ENCODE measurements at regions of chr9 and their contacts with region 1.

Region 1: DNA sequence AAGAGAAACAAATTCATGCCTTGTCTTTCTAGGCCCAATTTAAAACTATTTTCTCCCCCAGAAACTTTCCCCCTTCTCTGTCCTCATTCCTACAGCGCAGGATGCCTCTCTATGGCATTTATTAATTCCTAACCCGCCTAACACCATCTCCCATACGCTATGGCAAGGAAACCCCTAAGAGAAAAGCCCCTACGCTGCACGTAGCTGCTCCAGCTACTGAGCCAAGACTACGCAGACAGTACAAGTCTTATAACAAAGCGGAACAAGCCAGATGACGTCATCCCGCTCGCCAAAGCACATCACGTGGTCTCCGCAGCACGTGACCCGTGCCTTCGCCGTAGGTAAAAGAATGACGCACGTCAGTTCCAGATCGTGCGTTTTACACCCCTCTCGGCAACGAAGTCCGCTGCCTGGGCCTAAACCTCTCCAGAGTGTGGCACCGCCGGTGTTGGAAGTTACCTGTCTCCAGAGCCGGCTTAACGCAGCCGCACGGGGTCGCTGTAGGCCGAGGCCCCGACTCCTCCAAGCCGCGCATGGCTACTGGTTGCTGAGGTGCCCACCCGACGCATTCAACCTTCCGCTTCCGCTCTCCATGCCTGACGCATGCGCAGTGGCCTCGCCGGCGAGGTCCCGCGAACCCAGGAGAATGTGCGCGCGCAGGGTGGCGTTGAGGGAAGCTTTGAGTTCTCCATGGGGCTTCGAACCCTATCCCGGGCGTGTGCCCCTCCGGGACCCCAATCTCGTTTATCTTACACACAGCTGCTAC is at the start of gene TRMO:
- DNase-seq: peak; percentile 93 to 97
- ATAC-seq: peak; percentile 94 to 97
- H3K4me3 ChIP-seq: peak within 1 kb of the TSS; percentile 66 to 85 (median 68)
- H3K27ac ChIP-seq: peak within 1 kb of the TSS; percentile 90 to 98 (median 94)
- H3K4me1 ChIP-seq: peaks cover 17 to 34% of the 10 kb centered on the region in 2 donors
- H3K27me3 ChIP-seq: peaks cover 0 to 4% (median 0%) of the 10 kb centered on the region in 3 donors
- CTCF ChIP-seq: peak; percentile 55 to 86 (median 76)
- POLR2A ChIP-seq: peak; percentile 75 to 81
- total RNA-seq, gene TRMO: 10.5 to 23.4 (median 15.7) TPM

Region 2: GRCh38 chr9:96418074-96418809 is 1503.9 kb before region 1 on chr9 and contains the start of gene ZNF367:
- in situ Hi-C with region 1: no loop called
- intact Hi-C with region 1: loop called (anchors 5 kb)
- DNase-seq: peak; percentile 96 to 98
- ATAC-seq: peak; percentile 77 to 82
- H3K4me3 ChIP-seq: peak within 1 kb of the TSS; percentile 71 to 89 (median 84)
- H3K27ac ChIP-seq: peak within 1 kb of the TSS; percentile 99
- H3K4me1 ChIP-seq: peaks cover 21 to 26% of the 10 kb centered on the region in 2 donors
- H3K27me3 ChIP-seq: no peaks in the 10 kb centered on the region
- CTCF ChIP-seq: no peak
- POLR2A ChIP-seq: peak in 1 of 2 donors; percentile 8
- total RNA-seq, gene ZNF367: 0.15 to 5.1 (median 1.7) TPM

Region 3: GRCh38 chr9:97961361-97961760 is 39.2 kb after region 1 on chr9:
- in situ Hi-C with region 1: no loop called
- intact Hi-C with region 1: loop called (anchors 5 kb)
- DNase-seq: no peak
- ATAC-seq: no peak
- H3K4me3 ChIP-seq: no peak overlapping the region
- H3K27ac ChIP-seq: no peak overlapping the region
- H3K4me1 ChIP-seq: peaks cover 0 to 4% of the 10 kb centered on the region in 2 donors
- H3K27me3 ChIP-seq: no peaks in the 10 kb centered on the region
- CTCF ChIP-seq: no peak
- POLR2A ChIP-seq: no peak

Region 4: GRCh38 chr9:98056269-98057137 is 134.4 kb after region 1 on chr9 and contains the start of gene NANS:
- in situ Hi-C with region 1: loop called in 2 of 4 experiments (anchors 10 kb)
- intact Hi-C with region 1: loop called (anchors 1 kb)
- DNase-seq: peak; percentile 91
- ATAC-seq: peak; percentile 95 to 98
- H3K4me3 ChIP-seq: peak within 1 kb of the TSS; percentile 72 to 83 (median 74)
- H3K27ac ChIP-seq: peak within 1 kb of the TSS; percentile 91 to 93 (median 92)
- H3K4me1 ChIP-seq: peaks cover 8 to 15% of the 10 kb centered on the region in 2 donors
- H3K27me3 ChIP-seq: no peaks in the 10 kb centered on the region
- CTCF ChIP-seq: peak in 1 of 5 experiments; percentile 13
- POLR2A ChIP-seq: peak; percentile 92 to 98
- total RNA-seq, gene NANS: 29.0 to 64.7 (median 34.2) TPM

Region 5: GRCh38 chr9:98146101-98146991 is 224.2 kb after region 1 on chr9:
- in situ Hi-C with region 1: no loop called
- intact Hi-C with region 1: no loop called
- DNase-seq: no peak
- ATAC-seq: no peak
- H3K4me3 ChIP-seq: no peak overlapping the region
- H3K27ac ChIP-seq: no peak overlapping the region
- H3K4me1 ChIP-seq: no peaks in the 10 kb centered on the region
- H3K27me3 ChIP-seq: no peaks in the 10 kb centered on the region
- CTCF ChIP-seq: no peak
- POLR2A ChIP-seq: no peak

Region 6: DNA sequence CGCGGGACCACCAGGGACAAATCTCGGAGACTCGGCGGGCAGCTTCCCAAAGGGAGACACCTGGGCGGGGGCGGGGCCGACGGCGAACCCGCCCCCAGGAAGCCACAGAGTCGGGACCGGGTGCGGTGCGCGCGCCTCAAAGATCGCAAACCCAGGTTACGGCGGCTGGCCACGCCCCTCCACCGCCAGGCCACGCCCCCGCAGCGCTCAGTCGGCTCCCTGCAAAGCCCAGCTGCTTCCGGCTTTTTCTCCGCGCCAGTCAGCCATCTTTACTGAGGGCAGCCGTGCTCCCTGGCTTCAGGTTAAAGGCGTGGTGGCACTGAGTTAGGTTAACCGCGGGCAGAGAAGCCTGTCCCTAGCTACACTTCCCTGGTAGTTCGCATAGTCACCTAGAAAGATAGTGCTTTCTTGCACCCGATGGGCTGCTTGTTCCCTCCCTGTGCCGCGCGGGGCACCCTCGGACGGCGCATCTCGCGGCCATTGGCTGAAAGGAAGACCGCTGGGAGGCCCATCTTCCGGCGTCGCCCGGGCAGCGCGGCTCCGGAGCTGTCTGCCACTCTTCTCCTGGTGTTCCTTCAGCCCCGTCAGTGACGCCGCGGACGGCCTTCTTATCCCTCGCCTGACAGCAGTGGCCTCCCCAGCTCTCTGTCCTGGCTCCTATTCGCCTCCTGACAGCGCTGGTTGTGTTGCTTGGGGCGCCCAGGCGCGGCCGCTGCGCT is 333.6 kb after region 1 on chr9 and contains the start of gene TBC1D2:
- in situ Hi-C with region 1: loop called (anchors 5 to 25 kb)
- intact Hi-C with region 1: loop called (anchors 1 kb)
- DNase-seq: peak; percentile 91 to 93
- ATAC-seq: peak; percentile 95
- H3K4me3 ChIP-seq: peak within 1 kb of the TSS; percentile 76 to 100 (median 78)
- H3K27ac ChIP-seq: peak within 1 kb of the TSS; percentile 90 to 100 (median 93)
- H3K4me1 ChIP-seq: peaks cover 11 to 20% of the 10 kb centered on the region in 2 donors
- H3K27me3 ChIP-seq: no peaks in the 10 kb centered on the region
- CTCF ChIP-seq: peak in 2 of 5 experiments; percentile 25 to 30
- POLR2A ChIP-seq: peak; percentile 41 to 45
- total RNA-seq, gene TBC1D2: 0.66 to 2.9 (median 1.6) TPM

Region 7: GRCh38 chr9:98796364-98797101 is 874.4 kb after region 1 on chr9 and contains the start of gene ANKS6:
- in situ Hi-C with region 1: loop called in 1 of 4 experiments (anchors 25 kb)
- intact Hi-C with region 1: no loop called
- DNase-seq: peak; percentile 49 to 65
- ATAC-seq: peak; percentile 93 to 95
- H3K4me3 ChIP-seq: peak within 1 kb of the TSS; percentile 60 to 92 (median 66)
- H3K27ac ChIP-seq: peak within 1 kb of the TSS; percentile 63 to 79 (median 71)
- H3K4me1 ChIP-seq: peaks cover 8 to 11% of the 10 kb centered on the region in 2 donors
- H3K27me3 ChIP-seq: no peaks in the 10 kb centered on the region
- CTCF ChIP-seq: peak in 4 of 5 experiments; percentile 61 to 74 (median 67)
- POLR2A ChIP-seq: peak in 1 of 2 donors; percentile 48
- total RNA-seq, gene ANKS6: 3.9 to 7.0 (median 4.4) TPM

Measured in gastrocnemius medialis (tissue), 4 donors.